Left colon (tissue), 2 donors: ENCODE measurements at regions of chr20 and their contacts with region 1.

Region 1: DNA sequence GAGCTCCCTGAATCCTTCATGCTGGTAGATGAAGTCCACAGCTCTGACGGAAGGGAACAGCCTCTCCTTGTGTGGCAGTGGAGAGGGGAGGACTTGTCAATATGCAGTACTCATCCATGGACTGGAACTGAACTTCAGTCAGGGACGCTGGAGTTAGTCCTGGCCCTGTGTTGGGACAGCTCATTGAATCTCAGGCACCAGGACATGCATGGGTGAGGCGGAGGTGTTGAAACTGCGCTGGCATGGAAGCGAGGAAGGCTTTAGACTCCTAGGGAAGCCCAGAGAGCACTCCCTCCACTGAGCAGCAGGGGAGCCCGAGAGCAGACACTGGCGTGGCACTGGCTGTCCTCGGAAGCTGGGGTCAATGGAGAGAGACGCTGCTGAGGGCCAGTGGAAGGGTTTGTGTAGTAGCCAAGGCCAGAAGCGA is 161.3 kb upstream of the GGTLC1 start:
- DNase-seq: peak in 1 of 2 donors; percentile 11
- ATAC-seq: peak; percentile 60

Region 2: GRCh38 chr20:23970049-23970448 is 179.8 kb before region 1 on chr20:
- intact Hi-C with region 1: no loop called
- DNase-seq: no peak
- ATAC-seq: no peak

Region 3: DNA sequence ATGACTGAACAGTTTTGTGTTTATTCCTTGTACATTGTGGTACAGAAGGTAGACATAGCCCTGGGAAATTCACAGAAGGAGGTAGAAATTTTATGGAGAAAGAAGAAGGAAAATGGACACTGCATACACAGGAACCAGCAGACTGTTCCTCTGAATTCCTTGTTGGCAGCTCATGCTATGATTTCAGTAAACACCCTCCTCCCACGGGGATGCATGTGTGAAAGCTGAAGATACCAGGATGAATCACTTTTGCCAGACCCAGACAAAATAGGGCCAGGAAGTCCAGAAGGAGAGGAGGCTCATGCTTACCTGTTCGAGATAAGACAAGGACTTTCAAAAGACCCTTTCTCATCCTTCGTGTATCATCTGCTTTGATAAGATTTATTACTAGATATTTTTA is 51.0 kb before region 1 on chr20:
- intact Hi-C with region 1: loop called in 1 of 2 experiments (anchors 10 kb)
- DNase-seq: no peak
- ATAC-seq: no peak